ENCODE measurements at regions of chr4 and their contacts with region 1.

Region 1: GRCh38 chr4:23789766-23790165 is 100.1 kb downstream of the PPARGC1A start:
- DNase-seq: peak; percentile 82

Region 2: DNA sequence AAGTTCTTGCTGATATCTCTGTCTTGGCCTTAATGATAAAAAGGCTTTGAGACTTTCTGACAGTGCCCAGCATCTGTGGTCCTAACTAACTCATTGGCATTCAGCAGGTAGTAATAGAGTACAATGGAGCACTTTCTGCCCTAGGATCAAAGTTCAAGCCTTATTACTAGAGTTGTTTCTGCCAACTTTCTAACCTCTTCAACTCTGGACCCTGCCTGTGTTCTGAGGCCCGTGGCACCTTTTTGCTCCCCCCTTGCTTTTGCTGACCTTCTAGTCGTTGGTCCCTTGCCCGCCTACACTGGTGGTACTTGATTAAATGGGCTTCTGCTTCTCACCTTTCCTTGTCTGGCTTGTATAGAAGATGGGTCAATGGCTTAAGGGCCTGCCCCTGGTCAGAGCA is 26.2 kb before region 1 on chr4:
- intact Hi-C with region 1: loop called (anchors 1 kb)
- DNase-seq: no peak

Region 3: DNA sequence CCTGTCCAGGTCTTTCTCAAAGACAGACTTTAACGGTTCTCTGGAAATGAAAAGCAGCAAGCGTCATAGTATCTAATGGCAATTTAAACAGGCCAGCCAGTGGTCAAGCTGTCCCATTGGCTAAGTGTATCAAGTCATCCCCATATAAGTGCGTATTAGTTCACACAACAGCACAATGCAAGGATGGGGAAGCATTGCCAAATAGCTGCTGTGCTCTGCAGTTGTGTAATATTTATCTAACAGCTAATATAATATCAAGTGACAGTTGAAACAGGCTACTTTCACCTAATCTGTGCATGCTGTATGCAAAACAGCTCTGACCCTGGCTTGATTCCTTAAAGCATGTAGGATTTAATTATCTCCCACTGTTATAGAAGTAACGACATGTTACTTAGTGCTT is 234.8 kb after region 1 on chr4:
- intact Hi-C with region 1: no loop called
- DNase-seq: no peak